Activated naive CD4-positive, alpha-beta T cell treated with anti-CD3 and anti-CD28 coated beads, Interleukin-2, amount 10 ng/mL, durations not matched to agents 7 days and 5 days (primary cell): ENCODE measurements at regions of chr14 and their contacts with region 1.

Region 1: DNA sequence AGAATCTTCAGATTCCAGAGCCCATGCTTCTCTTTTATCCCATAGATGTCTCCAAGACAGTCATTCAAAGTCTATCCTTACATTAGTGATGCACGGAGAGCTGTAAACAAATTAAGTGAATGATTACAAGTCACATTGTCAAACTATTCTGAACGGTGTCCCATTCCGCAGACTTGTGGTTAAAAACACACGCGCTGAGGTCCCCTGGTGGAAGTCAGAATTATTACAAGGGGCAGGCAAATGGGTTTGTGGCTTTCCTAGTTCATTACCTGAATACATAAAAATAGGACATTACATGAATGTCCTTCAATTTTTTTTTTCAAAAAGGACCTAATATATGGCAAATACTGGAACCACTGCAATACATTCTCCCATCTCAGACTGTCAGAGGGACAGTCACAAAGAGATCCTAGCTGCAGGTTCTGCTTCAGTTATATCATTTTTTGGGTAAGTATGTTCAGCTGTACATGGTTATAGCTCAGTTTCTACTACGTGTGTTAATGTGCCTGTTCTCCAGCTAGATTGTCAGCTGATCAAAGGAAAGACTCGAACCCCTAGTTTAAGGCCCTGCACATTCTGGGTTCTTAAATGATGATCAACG is 53.1 kb upstream of the STON2 start:
- DNase-seq: peak; percentile 62
- H3K4me3 Mint-ChIP-seq: no peak overlapping the region
- H3K27ac Mint-ChIP-seq: no peak overlapping the region
- H3K4me1 Mint-ChIP-seq: peaks cover 7% of the 10 kb centered on the region
- H3K27me3 Mint-ChIP-seq: peaks cover 29% of the 10 kb centered on the region

Region 2: DNA sequence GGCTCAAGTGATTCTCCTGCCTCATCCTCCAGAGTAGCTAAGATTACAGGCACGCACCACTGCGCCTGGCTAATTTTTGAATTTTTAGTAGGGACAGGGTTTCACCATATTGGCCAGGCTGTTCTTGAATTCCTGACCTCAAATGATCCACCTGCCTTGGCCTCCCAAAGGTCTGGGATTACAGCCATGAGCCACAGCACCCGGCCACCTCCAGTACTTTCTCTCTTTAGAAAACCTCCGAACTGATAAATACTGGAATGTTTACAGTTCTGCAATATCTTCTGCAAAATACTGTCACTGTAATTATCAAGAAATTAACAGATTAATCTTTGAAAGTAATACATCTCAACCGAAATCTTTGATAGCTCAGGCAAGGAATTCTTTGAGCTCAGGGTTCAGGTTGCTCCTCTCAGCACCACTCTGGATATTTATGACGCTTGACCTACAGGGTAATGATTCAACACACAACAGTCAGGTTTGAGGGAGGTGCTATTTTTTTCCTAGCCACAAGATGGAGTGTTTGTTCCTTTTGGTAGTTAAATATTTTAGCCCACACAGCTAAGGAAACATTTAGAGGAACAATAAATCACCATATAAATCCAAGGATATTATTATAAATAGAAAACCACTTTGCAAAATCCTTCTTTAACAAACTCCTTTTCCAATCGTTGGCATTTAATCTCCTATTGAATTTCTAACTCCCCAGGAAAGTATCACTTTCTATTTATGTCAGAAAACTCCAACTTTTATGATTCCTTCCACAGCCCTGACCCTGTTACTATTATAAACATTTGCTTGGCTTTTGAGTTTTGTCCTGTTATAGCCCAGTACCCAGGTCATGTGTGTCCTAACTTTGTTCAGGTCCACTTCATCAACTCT is 183.9 kb before region 1 on chr14:
- CTCF ChIA-PET with region 1: interaction called, 105 read pairs
- DNase-seq: no peak
- H3K4me3 Mint-ChIP-seq: no peak overlapping the region
- H3K27ac Mint-ChIP-seq: no peak overlapping the region
- H3K4me1 Mint-ChIP-seq: peaks cover 15% of the 10 kb centered on the region
- H3K27me3 Mint-ChIP-seq: peaks cover 28% of the 10 kb centered on the region